HEK293 (cell line): ENCODE measurements at regions of chr18 and their contacts with region 1.

Region 1: DNA sequence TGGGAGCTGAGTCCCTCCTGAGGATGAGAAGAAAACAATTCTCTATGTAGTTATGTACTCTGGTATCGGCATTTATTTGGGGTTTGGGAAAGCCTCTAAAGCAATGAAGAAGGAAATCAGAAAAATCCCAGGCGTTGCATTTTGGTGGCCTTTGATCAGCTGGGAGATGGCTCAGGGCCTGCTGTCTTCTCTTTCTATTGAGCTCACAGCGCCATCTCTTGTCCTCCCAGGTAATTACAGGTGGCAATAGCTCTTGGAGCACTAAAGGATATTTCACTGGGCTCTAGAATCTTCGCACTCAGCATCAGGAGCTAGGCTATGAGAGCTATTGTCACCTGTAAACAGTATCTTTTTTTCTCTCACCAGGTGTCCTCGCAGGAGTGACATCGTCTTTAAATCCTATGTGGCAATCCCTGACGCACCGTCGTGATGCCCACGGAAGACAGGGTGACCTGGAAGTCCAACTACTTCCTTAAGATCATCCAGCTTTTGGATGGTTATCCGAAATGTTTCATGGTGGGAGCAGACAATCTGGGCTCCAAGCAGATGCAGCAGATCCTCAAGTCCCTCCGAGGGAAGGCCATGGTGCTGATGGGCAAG is 76.1 kb upstream of the PMAIP1 start:
- H3K4me3 ChIP-seq: no peak overlapping the region
- H3K27ac ChIP-seq: no peak overlapping the region
- H3K4me1 ChIP-seq: no peaks in the 10 kb centered on the region
- CTCF ChIP-seq: peak; percentile 71

Region 2: GRCh38 chr18:59308248-59308937 is 515.3 kb before region 1 on chr18:
- CTCF ChIA-PET with region 1: interaction called, 27 read pairs
- POLR2A ChIA-PET with region 1: no interaction called
- H3K4me3 ChIP-seq: peak overlapping the region; percentile 41
- H3K27ac ChIP-seq: no peak overlapping the region
- H3K4me1 ChIP-seq: peaks cover 5% of the 10 kb centered on the region
- CTCF ChIP-seq: peak; percentile 94

Region 3: DNA sequence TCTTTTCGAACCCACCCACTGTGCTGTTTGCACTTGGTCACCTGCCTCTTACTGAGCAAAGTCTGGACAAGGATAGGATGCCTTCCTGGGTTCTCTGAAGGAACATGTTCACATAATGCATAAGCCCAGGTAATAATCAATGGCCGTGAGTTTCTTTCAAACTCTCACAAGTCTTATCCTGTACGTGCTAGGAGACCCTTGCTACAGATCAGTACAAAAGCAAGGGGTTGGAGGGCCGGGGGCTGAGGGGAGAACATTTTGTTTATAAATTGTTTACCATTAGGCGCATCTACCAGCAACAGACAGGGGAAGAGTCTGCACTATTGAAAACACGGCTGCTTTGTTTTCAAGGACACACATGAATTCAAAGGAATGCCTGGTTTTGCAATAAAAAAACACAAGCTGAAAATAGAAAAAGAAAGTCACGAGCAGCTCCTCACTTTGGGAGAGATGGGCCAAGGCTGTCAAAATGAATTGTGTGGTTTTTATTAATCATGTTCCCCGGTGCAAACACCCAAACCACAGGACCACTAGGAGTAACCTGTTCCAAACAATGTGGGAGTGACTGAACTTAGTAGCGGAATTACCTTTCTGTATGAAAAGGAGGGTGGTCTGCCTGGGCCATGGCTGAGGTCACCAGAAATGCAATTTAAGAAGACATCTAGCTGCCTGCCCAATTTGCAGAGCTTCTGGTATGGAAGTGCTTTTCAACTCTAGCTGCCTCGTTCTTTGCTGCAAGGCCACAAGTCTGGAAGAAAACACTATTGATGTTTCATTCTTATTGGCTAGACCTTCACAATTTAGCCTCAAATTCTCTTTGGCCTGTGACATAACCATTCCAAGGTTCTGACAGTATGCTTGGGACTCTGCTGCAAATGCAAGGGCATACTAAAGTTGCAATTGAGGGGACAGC is 200.0 kb before region 1 on chr18:
- CTCF ChIA-PET with region 1: interaction called, 14 read pairs
- POLR2A ChIA-PET with region 1: no interaction called
- H3K4me3 ChIP-seq: no peak overlapping the region
- H3K27ac ChIP-seq: no peak overlapping the region
- H3K4me1 ChIP-seq: no peaks in the 10 kb centered on the region; the same call in 1 of the 2 replicates
- CTCF ChIP-seq: no peak

Region 4: DNA sequence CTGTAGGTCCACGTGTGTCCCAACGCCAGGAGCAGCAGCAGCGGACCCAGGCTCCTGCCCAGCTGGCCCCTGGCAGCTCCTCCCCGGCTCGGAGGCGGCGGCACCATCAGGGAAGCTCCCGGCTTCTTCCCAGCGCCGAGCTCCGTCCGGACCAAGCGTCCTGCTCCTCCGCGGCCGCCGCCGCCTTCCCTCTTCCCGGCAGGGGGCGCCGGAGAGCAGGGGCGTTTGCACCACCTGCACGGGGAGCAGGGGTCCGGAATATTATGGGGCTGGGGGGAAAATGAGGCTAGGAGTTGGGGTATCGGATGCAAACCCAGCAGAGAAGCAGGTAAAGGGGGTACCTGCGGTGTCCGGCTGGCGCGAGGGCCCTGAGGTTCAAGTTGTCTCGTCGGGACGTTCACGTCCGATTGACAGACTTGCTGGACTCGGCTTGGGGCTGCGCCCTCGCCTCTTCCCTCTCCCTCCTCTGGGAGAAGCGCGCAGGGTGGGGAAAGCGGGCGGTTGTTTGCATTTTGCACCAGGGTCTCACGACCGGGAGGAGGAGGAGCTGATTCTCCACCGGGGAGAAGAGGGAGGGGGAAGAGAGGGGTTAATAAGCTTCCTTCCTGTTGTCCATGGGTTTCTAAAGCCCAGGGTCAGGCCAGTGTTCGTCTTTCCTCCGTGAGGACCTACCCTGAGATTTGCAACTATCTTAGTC is 126.3 kb before region 1 on chr18 and contains the start of gene CCBE1:
- CTCF ChIA-PET with region 1: interaction called, 64 read pairs
- POLR2A ChIA-PET with region 1: interaction called, 9 read pairs
- H3K4me3 ChIP-seq: peak within 1 kb of the TSS; percentile 63
- H3K27ac ChIP-seq: peak within 1 kb of the TSS; percentile 64; the same call in 1 of the 2 replicates
- H3K4me1 ChIP-seq: peaks cover 9% of the 10 kb centered on the region; the same call in 1 of the 2 replicates
- CTCF ChIP-seq: peak; percentile 99

Region 5: GRCh38 chr18:59787998-59788790 is 35.5 kb before region 1 on chr18:
- CTCF ChIA-PET with region 1: interaction called, 66 read pairs
- POLR2A ChIA-PET with region 1: interaction called, 3 read pairs
- H3K4me3 ChIP-seq: no peak overlapping the region
- H3K27ac ChIP-seq: no peak overlapping the region; the same call in 1 of the 2 replicates
- H3K4me1 ChIP-seq: peaks cover 4% of the 10 kb centered on the region; the same call in 1 of the 2 replicates
- CTCF ChIP-seq: no peak

Region 6: GRCh38 chr18:60228609-60229595 is 405.2 kb after region 1 on chr18:
- CTCF ChIA-PET with region 1: no interaction called
- POLR2A ChIA-PET with region 1: no interaction called
- H3K4me3 ChIP-seq: no peak overlapping the region
- H3K27ac ChIP-seq: no peak overlapping the region
- H3K4me1 ChIP-seq: no peaks in the 10 kb centered on the region
- CTCF ChIP-seq: no peak